Ovary (tissue), 10 donors: ENCODE measurements at regions of chr9 and their contacts with region 1.

Region 1: GRCh38 chr9:4297151-4297785 is 2.6 kb downstream of the GLIS3 start:
- DNase-seq: peak; percentile 79 to 86 (median 80)
- H3K4me3 ChIP-seq: peak overlapping the region; percentile 70
- H3K27ac ChIP-seq: peak overlapping the region; percentile 89 to 93
- H3K4me1 ChIP-seq: peaks cover 5% of the 10 kb centered on the region
- H3K27me3 ChIP-seq: no peaks in the 10 kb centered on the region
- CTCF ChIP-seq: peak in 2 of 3 donors; percentile 33 to 62
- EP300 ChIP-seq: no peak
- POLR2A ChIP-seq: peak; percentile 11

Region 2: GRCh38 chr9:3525836-3526164 is 771.5 kb before region 1 on chr9 and contains the start of gene RFX3:
- intact Hi-C with region 1: loop called in 1 of 4 experiments (anchors 10 kb)
- DNase-seq: peak; percentile 90 to 95 (median 92)
- H3K4me3 ChIP-seq: peak within 1 kb of the TSS; percentile 82
- H3K27ac ChIP-seq: peak within 1 kb of the TSS; percentile 100
- H3K4me1 ChIP-seq: no peaks in the 10 kb centered on the region
- H3K27me3 ChIP-seq: no peaks in the 10 kb centered on the region
- CTCF ChIP-seq: no peak
- EP300 ChIP-seq: no peak
- POLR2A ChIP-seq: no peak
- total RNA-seq, gene RFX3: 8.8 to 22.7 (median 15.9) TPM

Region 3: DNA sequence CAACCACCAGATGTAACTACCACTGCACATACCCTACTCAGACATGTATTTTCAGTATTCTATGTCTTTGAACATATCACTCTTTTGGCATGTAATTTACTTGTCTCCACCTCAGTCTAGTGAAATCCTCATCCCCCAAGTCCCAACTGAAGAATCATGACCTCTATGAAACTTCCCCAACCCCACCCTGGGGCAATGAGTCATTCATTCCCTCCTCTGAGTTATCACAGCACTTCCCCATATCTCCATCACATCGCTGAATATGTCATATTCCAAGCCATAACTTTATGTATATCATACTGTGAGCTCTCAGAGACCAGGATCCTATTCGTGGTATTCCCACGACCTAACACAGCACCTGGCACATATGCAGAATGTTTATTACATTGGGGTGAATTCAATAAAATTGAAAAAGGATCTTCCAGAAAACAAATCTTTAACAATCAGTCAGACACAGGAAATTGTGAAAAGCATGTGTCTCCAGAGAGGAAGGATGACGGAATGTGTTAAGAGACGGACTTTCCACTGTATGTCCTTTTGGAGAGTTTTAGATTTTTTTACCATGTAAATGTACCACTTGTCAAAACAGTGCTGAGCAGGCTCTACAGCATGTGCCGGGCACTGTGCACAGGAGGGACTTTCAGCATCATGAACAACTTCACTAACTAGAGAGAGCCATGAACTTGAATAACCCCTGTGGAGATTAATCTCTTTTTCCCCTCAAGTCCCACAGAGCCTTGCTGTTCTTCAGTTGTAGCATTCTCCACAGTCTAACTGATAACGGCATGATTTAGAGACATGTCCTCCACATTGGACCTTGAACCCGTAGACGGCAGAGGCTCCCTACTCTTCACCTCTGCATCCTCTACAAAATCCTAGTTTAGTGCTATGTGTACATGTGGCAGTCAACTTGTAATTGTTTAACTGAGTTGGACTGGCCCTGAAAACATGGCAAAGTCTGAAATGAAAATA is 210.9 kb before region 1 on chr9:
- intact Hi-C with region 1: loop called in 1 of 4 experiments (anchors 10 kb)
- DNase-seq: no peak
- H3K4me3 ChIP-seq: no peak overlapping the region
- H3K27ac ChIP-seq: peak overlapping the region in 1 of 2 donors; percentile 20
- H3K4me1 ChIP-seq: peaks cover 17% of the 10 kb centered on the region
- H3K27me3 ChIP-seq: no peaks in the 10 kb centered on the region
- CTCF ChIP-seq: no peak
- EP300 ChIP-seq: no peak
- POLR2A ChIP-seq: no peak

Region 4: GRCh38 chr9:4117835-4118610 is 179.2 kb before region 1 on chr9:
- intact Hi-C with region 1: loop called in 1 of 4 experiments (anchors 10 kb)
- DNase-seq: peak in 4 of 5 donors; percentile 28 to 59 (median 52)
- H3K4me3 ChIP-seq: no peak overlapping the region
- H3K27ac ChIP-seq: peak overlapping the region; percentile 16 to 63
- H3K4me1 ChIP-seq: peaks cover 7% of the 10 kb centered on the region
- H3K27me3 ChIP-seq: no peaks in the 10 kb centered on the region
- CTCF ChIP-seq: no peak
- EP300 ChIP-seq: no peak
- POLR2A ChIP-seq: no peak

Region 5: DNA sequence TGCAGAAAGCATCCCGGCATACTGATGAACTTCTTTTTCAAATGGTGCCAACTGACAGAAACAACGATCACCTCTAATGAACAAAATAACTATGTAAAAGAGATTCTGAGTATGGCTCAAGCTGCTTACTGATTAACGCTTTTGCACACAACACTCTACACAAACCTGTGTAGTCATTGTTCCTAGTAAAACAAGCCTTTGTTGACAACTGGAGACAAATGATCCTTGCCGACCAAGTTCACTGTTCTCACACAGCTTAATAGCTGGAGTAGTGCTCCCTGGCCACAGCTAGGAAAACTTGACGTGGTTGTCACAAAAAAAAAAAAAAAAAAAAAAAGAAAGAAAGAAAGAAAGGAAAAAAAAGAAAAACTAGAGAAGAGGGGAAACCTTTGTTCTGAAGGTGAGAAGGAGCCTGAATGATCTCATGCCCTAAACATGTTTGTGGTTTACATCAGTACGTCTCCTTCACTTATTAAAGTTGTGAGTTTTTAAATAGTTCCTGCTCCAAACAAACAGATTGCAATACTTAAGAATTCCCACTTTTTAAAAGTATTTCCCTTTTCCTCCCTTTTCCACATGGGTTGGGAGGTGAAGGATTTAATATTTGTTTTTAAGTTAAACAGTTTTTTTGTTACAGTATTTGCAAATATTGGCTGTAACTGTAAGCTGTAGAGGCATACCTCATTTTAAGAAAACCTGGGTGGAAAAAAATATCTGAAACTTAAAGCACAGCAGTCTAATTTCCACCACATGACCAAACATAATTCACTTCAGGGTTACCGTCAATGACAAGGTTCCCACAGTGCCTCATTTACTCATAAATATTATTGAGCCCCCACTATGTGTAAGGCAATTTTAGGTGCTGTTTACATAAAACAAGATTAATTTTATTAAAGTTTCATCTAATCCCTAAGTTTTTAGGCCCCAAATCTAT is 61.1 kb before region 1 on chr9:
- intact Hi-C with region 1: loop called in 1 of 4 experiments (anchors 10 kb)
- DNase-seq: no peak
- H3K4me3 ChIP-seq: no peak overlapping the region
- H3K27ac ChIP-seq: peak overlapping the region in 1 of 2 donors; percentile 14
- H3K4me1 ChIP-seq: peaks cover 10% of the 10 kb centered on the region
- H3K27me3 ChIP-seq: no peaks in the 10 kb centered on the region
- CTCF ChIP-seq: no peak
- EP300 ChIP-seq: no peak
- POLR2A ChIP-seq: no peak